ENCODE measurements at regions of chr17 and their contacts with region 1.

Region 1: DNA sequence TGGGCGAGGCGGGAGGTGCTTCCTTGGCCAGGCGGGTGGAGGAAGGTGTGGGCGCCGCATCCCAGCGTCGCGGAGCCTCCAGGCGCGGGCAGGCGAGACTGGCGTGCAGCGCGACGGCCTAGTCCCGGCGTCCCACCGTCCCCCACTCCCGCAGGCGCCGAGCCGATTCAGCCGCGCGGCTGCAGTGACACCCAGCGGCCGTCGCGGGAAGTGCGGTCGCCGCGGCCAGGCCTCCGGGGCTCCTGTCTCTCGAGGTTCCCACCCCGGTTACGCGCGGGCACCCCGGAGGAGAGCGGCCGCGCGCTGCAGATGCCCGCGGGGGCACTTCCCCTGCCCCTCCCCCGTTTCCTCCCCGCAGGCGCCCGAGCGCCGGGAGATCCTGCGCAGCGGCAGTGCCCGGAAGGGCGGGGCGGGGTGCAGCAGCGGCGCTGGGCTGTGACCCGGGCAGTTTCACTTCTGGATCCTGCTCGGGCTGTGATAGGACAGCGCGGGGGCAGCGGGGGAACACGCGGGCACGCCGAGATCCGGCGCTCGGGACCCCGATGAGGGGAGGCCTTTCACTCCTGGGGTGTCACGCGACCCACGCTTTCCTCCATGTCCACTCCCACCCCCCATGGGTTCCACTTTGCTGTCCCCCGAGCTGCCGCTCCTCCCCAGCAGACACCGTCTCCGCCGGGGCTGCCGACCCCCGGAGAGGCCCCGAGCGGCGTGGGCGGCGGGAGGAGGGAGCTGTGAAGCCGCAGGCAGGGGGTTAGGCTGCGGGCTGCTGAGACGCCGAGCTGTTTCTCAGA is 16.6 kb downstream of the GRB7 start:
- DNase-seq: peak; percentile 85 to 95
- ATAC-seq: peak; percentile 80 to 94
- H3K4me3 ChIP-seq: peak overlapping the region; percentile 69
- H3K27ac ChIP-seq: peak overlapping the region; percentile 83 to 96
- H3K4me1 ChIP-seq: peaks cover 21% of the 10 kb centered on the region
- CTCF ChIP-seq: peak; percentile 99
- EP300 ChIP-seq: no peak
- POLR2A ChIP-seq: peak; percentile 68
- RAD21 ChIP-seq: peak; percentile 92 to 100

Region 2: GRCh38 chr17:39636927-39637736 is 117.2 kb before region 1 on chr17 and contains the start of gene STARD3:
- CTCF ChIA-PET with region 1: interaction called, 16 read pairs
- POLR2A ChIA-PET with region 1: no interaction called
- DNase-seq: peak; percentile 92 to 97
- ATAC-seq: peak; percentile 82 to 94
- H3K4me3 ChIP-seq: peak within 1 kb of the TSS; percentile 82
- H3K27ac ChIP-seq: peak within 1 kb of the TSS; percentile 87 to 93
- H3K4me1 ChIP-seq: peaks cover 29% of the 10 kb centered on the region
- CTCF ChIP-seq: 0 out of 3 replicates have a peak, but pooled peaks have one; percentile 18
- EP300 ChIP-seq: no peak
- POLR2A ChIP-seq: peak; percentile 75
- RAD21 ChIP-seq: no peak
- polyA plus RNA-seq, gene STARD3: 56.0 and 60.9 TPM in 2 replicates

Region 3: GRCh38 chr17:39653662-39654331 is 100.6 kb before region 1 on chr17:
- CTCF ChIA-PET with region 1: interaction called, 14 read pairs
- POLR2A ChIA-PET with region 1: no interaction called
- DNase-seq: peak; percentile 67 to 91
- ATAC-seq: peak; percentile 65 to 86; a peak in 5 of 6 replicates
- H3K4me3 ChIP-seq: no peak overlapping the region
- H3K27ac ChIP-seq: no peak overlapping the region
- H3K4me1 ChIP-seq: no peaks in the 10 kb centered on the region
- CTCF ChIP-seq: peak; percentile 90
- EP300 ChIP-seq: no peak
- POLR2A ChIP-seq: no peak
- RAD21 ChIP-seq: peak; percentile 28 to 41; a peak in 3 of 5 replicates

Region 4: GRCh38 chr17:39668199-39668966 is 86.0 kb before region 1 on chr17 and contains the start of gene PNMT:
- CTCF ChIA-PET with region 1: interaction called, 18 read pairs
- POLR2A ChIA-PET with region 1: no interaction called
- DNase-seq: peak; percentile 78 to 84
- ATAC-seq: peak; percentile 30 to 52; a peak in 5 of 6 replicates
- H3K4me3 ChIP-seq: peak within 1 kb of the TSS; percentile 38
- H3K27ac ChIP-seq: peak within 1 kb of the TSS; percentile 74 to 89; a peak in 5 of 6 replicates
- H3K4me1 ChIP-seq: peaks cover 48% of the 10 kb centered on the region
- CTCF ChIP-seq: peak; percentile 68
- EP300 ChIP-seq: no peak
- POLR2A ChIP-seq: no peak
- RAD21 ChIP-seq: peak; percentile 43 to 49
- polyA plus RNA-seq, gene PNMT: not detected in 2 replicates

Region 5: GRCh38 chr17:39687811-39688518 is 66.4 kb before region 1 on chr17 and contains the start of gene PGAP3:
- CTCF ChIA-PET with region 1: interaction called, 10 read pairs
- POLR2A ChIA-PET with region 1: no interaction called
- DNase-seq: peak; percentile 96 to 99
- ATAC-seq: peak; percentile 96 to 97
- H3K4me3 ChIP-seq: peak within 1 kb of the TSS; percentile 61
- H3K27ac ChIP-seq: peak within 1 kb of the TSS; percentile 80 to 92
- H3K4me1 ChIP-seq: peaks cover 7% of the 10 kb centered on the region
- CTCF ChIP-seq: 0 out of 3 replicates have a peak, but pooled peaks have one; percentile 5
- EP300 ChIP-seq: no peak
- POLR2A ChIP-seq: peak; percentile 66
- RAD21 ChIP-seq: no peak; a peak in 1 of 5 replicates
- polyA plus RNA-seq, gene PGAP3: 8.5 and 10.6 TPM in 2 replicates

Region 6: GRCh38 chr17:39738931-39739884 is 15.1 kb before region 1 on chr17:
- CTCF ChIA-PET with region 1: interaction called, 21 read pairs
- POLR2A ChIA-PET with region 1: no interaction called
- DNase-seq: peak; percentile 80 to 95
- ATAC-seq: peak; percentile 44 to 69
- H3K4me3 ChIP-seq: peak overlapping the region; percentile 63
- H3K27ac ChIP-seq: peak overlapping the region; percentile 73 to 87
- H3K4me1 ChIP-seq: peaks cover 40% of the 10 kb centered on the region
- CTCF ChIP-seq: no peak
- EP300 ChIP-seq: no peak
- POLR2A ChIP-seq: no peak
- RAD21 ChIP-seq: no peak

Region 7: GRCh38 chr17:39813631-39814030 is 59.3 kb after region 1 on chr17:
- CTCF ChIA-PET with region 1: no interaction called
- POLR2A ChIA-PET with region 1: no interaction called
- DNase-seq: no peak
- ATAC-seq: no peak
- H3K4me3 ChIP-seq: no peak overlapping the region
- H3K27ac ChIP-seq: no peak overlapping the region
- H3K4me1 ChIP-seq: no peaks in the 10 kb centered on the region
- CTCF ChIP-seq: no peak
- EP300 ChIP-seq: no peak
- POLR2A ChIP-seq: no peak
- RAD21 ChIP-seq: no peak

Measured in A549 (cell line).